HCT116 (cell line): ENCODE measurements at regions of chr15 and their contacts with region 1.

Region 1: DNA sequence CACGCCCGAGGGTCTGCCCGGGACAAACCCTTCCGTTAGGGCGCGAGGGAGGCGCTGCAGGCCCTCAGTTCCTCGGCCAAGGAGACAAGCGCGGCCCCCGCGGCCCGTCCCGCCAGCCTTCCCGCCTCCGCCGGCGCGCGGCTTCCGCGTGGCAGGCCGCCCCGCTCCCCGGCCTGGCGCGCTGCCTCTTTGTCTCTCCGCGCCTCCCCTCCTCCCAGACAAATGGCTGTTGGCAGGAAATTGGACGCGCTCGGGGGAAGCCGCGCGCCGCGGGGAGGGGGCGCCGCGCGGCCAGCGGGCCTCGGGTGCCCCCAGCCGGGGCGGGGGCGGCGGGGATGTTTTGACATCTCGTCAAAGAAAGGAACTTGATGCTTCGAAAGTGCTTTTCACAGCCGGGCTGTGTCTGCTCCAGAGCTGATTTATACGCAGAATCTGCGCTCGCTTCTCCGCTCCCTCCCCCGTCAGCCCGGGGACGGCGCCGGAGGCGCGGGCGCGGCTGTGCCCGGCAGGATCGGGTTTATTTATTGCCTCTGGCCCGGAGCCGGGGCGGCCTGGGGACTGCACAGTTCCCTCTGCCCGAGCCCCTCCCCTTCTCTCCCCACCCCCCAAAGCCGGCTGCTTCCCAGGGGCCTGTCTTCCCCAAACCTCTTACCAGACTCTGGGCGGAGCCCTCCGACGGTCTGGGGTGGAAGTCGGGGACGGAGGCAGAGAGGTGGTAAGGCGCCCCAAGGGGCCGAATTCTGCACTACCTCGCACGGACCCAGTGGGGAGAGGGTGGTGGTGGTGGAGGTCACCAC is 20.7 kb downstream of the SHF start:
- DNase-seq: peak; percentile 59
- ATAC-seq: peak; percentile 85
- H3K4me3 ChIP-seq: peak overlapping the region; percentile 73 to 74
- H3K27ac ChIP-seq: peak overlapping the region; percentile 90
- H3K4me1 ChIP-seq: peaks cover 15 to 32% of the 10 kb centered on the region in 2 experiments
- H3K27me3 ChIP-seq: no peaks in the 10 kb centered on the region
- CTCF ChIP-seq: peak; percentile 63 to 79 (median 70); a peak in 5 of 6 replicates
- POLR2A ChIP-seq: no peak
- RAD21 ChIP-seq: peak; percentile 17; the same call in 1 of the 2 replicates

Region 2: DNA sequence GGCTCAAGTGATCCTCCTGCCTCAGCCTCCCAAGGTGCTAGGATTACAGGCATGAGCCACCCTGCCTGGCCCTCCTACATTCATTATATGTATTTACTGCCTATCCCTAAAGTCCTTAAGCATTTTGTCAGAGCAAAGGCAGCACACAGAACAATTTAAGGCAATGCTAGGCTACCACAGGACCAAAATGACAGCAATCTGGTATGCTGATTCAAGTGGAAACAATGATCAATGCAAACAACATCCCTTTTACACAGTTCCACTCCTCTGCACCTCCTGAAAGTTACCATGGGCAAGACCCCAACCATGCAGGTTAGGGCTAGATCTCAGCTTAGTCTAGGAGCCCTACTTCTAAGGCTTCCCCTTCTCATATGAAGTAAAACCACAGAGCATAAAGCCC is 543.9 kb before region 1 on chr15:
- CTCF ChIA-PET with region 1: no interaction called
- POLR2A ChIA-PET with region 1: no interaction called
- RAD21 ChIA-PET with region 1: no interaction called
- intact Hi-C with region 1: no loop called
- DNase-seq: no peak
- ATAC-seq: no peak
- H3K4me3 ChIP-seq: no peak overlapping the region
- H3K27ac ChIP-seq: no peak overlapping the region
- H3K4me1 ChIP-seq: no peaks in the 10 kb centered on the region
- H3K27me3 ChIP-seq: no peaks in the 10 kb centered on the region
- CTCF ChIP-seq: no peak
- POLR2A ChIP-seq: no peak
- RAD21 ChIP-seq: no peak

Region 3: GRCh38 chr15:45118131-45118588 is 48.9 kb before region 1 on chr15:
- CTCF ChIA-PET with region 1: interaction called, 16 read pairs
- POLR2A ChIA-PET with region 1: no interaction called
- RAD21 ChIA-PET with region 1: no interaction called
- intact Hi-C with region 1: no loop called
- DNase-seq: peak; percentile 75
- ATAC-seq: peak; percentile 99
- H3K4me3 ChIP-seq: no peak overlapping the region
- H3K27ac ChIP-seq: no peak overlapping the region
- H3K4me1 ChIP-seq: peaks cover 2 to 16% of the 10 kb centered on the region in 2 experiments; a peak in 3 of 4 replicates
- H3K27me3 ChIP-seq: no peaks in the 10 kb centered on the region
- CTCF ChIP-seq: peak; percentile 99 to 100 (median 99)
- POLR2A ChIP-seq: no peak
- RAD21 ChIP-seq: peak; percentile 79

Region 4: GRCh38 chr15:45126535-45127158 is 40.4 kb before region 1 on chr15:
- CTCF ChIA-PET with region 1: interaction called, 14 read pairs
- POLR2A ChIA-PET with region 1: interaction called, 5 read pairs
- RAD21 ChIA-PET with region 1: interaction called in 1 of 2 experiments, 8 read pairs
- intact Hi-C with region 1: no loop called
- DNase-seq: peak; percentile 36
- ATAC-seq: peak; percentile 57
- H3K4me3 ChIP-seq: no peak overlapping the region
- H3K27ac ChIP-seq: no peak overlapping the region
- H3K4me1 ChIP-seq: peaks cover 9 to 22% of the 10 kb centered on the region in 2 experiments
- H3K27me3 ChIP-seq: no peaks in the 10 kb centered on the region
- CTCF ChIP-seq: peak; percentile 71 to 92 (median 78)
- POLR2A ChIP-seq: no peak
- RAD21 ChIP-seq: peak; percentile 68

Region 5: GRCh38 chr15:45198337-45199135 is 31.5 kb after region 1 on chr15:
- CTCF ChIA-PET with region 1: interaction called, 44 read pairs
- POLR2A ChIA-PET with region 1: interaction called, 6 read pairs
- RAD21 ChIA-PET with region 1: no interaction called
- intact Hi-C with region 1: loop called (anchors 2 kb)
- DNase-seq: peak; percentile 94
- ATAC-seq: peak; percentile 71
- H3K4me3 ChIP-seq: peak overlapping the region; percentile 58 to 62
- H3K27ac ChIP-seq: peak overlapping the region; percentile 76
- H3K4me1 ChIP-seq: peaks cover 11 to 36% of the 10 kb centered on the region in 2 experiments
- H3K27me3 ChIP-seq: no peaks in the 10 kb centered on the region
- CTCF ChIP-seq: peak in 2 of 3 experiments; percentile 79 to 86; a peak in 4 of 6 replicates
- POLR2A ChIP-seq: peak; percentile 52
- RAD21 ChIP-seq: no peak

Region 6: GRCh38 chr15:45205192-45205591 is 38.2 kb after region 1 on chr15:
- CTCF ChIA-PET with region 1: interaction called, 44 read pairs
- POLR2A ChIA-PET with region 1: interaction called, 6 read pairs
- RAD21 ChIA-PET with region 1: interaction called in 1 of 2 experiments, 4 read pairs
- intact Hi-C with region 1: no loop called
- DNase-seq: peak; percentile 58
- ATAC-seq: peak; percentile 49
- H3K4me3 ChIP-seq: no peak overlapping the region
- H3K27ac ChIP-seq: no peak overlapping the region
- H3K4me1 ChIP-seq: peaks cover 0 to 14% of the 10 kb centered on the region in 2 experiments; a peak in 2 of 4 replicates
- H3K27me3 ChIP-seq: no peaks in the 10 kb centered on the region
- CTCF ChIP-seq: peak in 2 of 3 experiments; percentile 96 to 97; a peak in 4 of 6 replicates
- POLR2A ChIP-seq: no peak
- RAD21 ChIP-seq: no peak

Region 7: GRCh38 chr15:45402162-45402954 is 235.3 kb after region 1 on chr15:
- CTCF ChIA-PET with region 1: interaction called, 48 read pairs
- POLR2A ChIA-PET with region 1: interaction called, 10 read pairs
- RAD21 ChIA-PET with region 1: interaction called, 3 to 8 read pairs
- intact Hi-C with region 1: loop called (anchors 1 kb)
- DNase-seq: peak; percentile 99
- ATAC-seq: peak; percentile 92
- H3K4me3 ChIP-seq: peak overlapping the region; percentile 78 to 86
- H3K27ac ChIP-seq: peak overlapping the region; percentile 97
- H3K4me1 ChIP-seq: peaks cover 5 to 15% of the 10 kb centered on the region in 2 experiments; a peak in 3 of 4 replicates
- H3K27me3 ChIP-seq: no peaks in the 10 kb centered on the region
- CTCF ChIP-seq: no peak
- POLR2A ChIP-seq: peak; percentile 97
- RAD21 ChIP-seq: no peak

Region 8: DNA sequence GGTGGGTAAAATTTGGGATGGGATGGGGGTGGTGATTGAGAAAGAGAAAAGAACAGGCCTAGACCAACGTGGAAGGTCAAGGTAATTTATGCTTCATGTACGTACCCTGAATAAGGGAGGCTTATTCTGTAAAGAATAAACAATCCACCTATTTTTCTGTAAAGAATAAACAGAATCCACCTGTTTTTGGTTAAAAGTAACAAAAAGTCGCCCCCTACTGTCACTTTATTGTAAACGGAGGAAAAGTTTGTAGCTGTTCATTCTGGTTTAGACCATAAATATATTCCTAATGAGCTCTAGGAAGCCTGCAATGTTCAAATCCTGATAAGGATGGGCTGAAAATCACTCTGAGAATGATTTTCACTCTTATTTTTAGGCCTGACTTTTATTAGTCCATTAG is 444.3 kb after region 1 on chr15:
- CTCF ChIA-PET with region 1: interaction called, 7 read pairs
- POLR2A ChIA-PET with region 1: no interaction called
- RAD21 ChIA-PET with region 1: no interaction called
- intact Hi-C with region 1: loop called (anchors 10 kb)
- DNase-seq: no peak
- ATAC-seq: no peak
- H3K4me3 ChIP-seq: no peak overlapping the region
- H3K27ac ChIP-seq: no peak overlapping the region
- H3K4me1 ChIP-seq: peaks cover 0 to 5% of the 10 kb centered on the region in 2 experiments; a peak in 1 of 4 replicates
- H3K27me3 ChIP-seq: no peaks in the 10 kb centered on the region
- CTCF ChIP-seq: peak; percentile 37 to 67 (median 60); a peak in 4 of 6 replicates
- POLR2A ChIP-seq: no peak
- RAD21 ChIP-seq: peak; percentile 57